Activated T-helper 1 cell treated with anti-CD3 and anti-CD28 coated beads, Interleukin-12 subunit alpha, Interleukin-12 subunit beta, Interleukin-2, Interleukin-4 antibody, amounts not matched to agents 30 ng/mL and 10 ng/mL and 1 ng/mL, durations not matched to agents 14 hours and 24 hours and 36 hours (primary cell): ENCODE measurements at regions of chr17 and their contacts with region 1.

Region 1: DNA sequence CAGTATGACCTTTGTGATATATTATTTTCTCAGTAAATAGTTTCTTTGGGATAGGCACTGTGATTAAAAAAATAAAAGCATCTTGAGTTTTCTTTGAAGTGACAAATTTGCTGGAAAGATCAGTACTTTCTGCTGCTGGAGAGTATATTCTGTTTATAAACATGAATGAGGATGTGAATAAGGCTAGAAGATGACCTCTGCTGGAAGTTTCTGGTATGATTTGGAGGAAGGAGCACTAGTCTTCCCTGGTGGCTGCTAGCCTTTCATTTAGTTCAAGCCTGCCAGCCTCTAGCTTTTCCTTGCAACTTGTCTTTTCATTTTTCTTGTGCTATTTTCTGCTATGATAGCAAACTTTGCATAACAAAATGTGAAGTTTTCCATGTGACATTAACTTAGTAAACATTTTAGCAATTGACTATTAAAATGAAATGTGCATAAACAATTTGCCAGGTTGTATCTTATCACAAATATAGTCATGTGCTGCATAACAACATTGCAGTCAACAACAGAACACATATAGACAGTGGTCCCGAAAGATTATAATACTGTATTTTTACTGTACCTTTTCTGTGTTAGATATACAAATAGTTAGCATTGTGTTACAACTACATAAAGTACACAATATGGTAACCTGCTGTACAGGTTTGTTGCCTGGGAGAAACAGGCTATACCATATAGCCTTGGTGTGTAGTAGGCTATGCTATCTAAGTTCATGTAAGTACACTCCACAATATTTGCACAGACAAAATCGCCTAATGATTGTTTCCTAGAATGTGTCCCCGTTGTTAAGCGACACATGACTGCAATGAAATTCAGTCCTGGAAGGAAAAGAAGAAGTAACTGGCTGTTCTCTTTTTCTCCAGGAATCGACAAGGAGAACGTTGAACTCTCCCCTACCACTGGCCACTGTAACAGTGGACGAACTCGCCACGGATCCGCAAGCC is 18.1 kb upstream of the RAB11FIP4 start:
- DNase-seq: no peak
- H3K4me3 Mint-ChIP-seq: no peak overlapping the region
- H3K27ac Mint-ChIP-seq: no peak overlapping the region
- H3K4me1 Mint-ChIP-seq: peaks cover 21% of the 10 kb centered on the region
- H3K27me3 Mint-ChIP-seq: no peaks in the 10 kb centered on the region

Region 2: DNA sequence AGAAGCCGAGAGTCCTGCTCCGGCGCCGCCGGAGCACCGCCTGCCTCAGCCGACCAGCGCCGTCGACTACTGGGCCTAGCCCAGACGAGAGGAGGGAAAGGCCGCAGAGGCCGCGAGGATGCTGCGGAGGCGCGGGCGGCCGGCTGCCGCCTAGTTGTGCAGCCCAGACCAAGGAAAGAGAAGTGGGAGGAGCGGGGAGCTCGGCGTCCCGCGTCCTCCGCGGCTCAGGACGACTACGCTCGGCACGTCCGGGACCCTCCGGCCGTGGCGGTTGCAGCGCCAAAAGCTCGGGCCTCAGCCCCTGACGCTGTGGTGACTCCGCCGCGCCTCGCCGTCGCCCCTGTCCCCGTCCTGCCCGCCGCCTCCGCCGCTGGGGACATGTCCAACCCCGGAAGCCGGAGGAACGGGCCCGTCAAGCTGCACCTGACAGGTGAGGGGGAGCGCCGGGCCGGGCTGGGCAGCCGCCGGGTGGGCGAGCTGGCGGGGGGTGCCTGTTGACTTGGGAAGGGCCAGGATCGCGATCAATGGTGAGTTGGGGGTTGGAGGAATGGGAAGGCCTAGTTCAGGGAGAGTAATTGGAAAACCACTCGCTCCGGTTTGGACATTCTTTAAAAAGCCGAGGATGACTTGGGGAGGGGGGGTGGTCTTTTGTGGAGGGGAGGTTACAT is 364.9 kb before region 1 on chr17:
- intact Hi-C with region 1: loop called (anchors 1 kb)
- DNase-seq: peak; percentile 43
- H3K4me3 Mint-ChIP-seq: peak overlapping the region; percentile 85
- H3K27ac Mint-ChIP-seq: peak overlapping the region; percentile 70
- H3K4me1 Mint-ChIP-seq: peaks cover 30% of the 10 kb centered on the region
- H3K27me3 Mint-ChIP-seq: peaks cover 16% of the 10 kb centered on the region

Region 3: DNA sequence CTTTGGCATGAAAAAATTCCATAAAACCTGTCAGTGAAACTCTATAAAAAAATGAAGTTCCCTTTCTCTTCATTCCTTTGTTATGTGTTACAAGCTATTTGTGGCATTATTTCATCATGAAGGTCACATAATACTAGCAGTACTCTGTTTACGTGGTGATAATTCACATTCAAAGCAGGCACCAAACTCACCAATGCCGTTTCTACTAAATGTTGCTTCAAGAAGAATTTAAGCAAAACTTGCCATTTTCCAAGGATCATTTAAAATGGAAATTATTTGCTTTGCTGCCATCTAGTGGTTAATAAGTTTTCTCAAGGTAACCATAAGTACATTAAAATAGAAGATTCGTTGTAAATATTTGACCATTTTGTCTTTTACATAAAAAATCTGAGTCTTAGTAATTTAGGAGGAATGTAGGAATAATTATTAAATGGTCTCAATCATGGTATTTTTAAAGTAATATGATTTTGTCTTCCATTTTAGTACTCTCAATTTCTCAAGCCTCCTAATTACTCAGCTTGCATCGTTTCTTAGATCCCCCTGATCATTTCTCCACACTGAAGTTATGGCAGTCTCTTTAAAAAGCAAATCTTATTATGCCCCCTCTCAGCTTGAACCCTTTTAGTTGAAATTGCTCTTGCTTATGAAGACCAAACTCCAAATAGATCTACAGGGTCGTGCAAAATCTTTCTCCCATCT is 157.2 kb before region 1 on chr17:
- intact Hi-C with region 1: loop called (anchors 2 kb)
- DNase-seq: no peak
- H3K4me3 Mint-ChIP-seq: no peak overlapping the region
- H3K27ac Mint-ChIP-seq: no peak overlapping the region
- H3K4me1 Mint-ChIP-seq: no peaks in the 10 kb centered on the region
- H3K27me3 Mint-ChIP-seq: no peaks in the 10 kb centered on the region

Region 4: GRCh38 chr17:31313982-31314784 is 59.2 kb before region 1 on chr17 and contains the start of gene EVI2B:
- intact Hi-C with region 1: loop called (anchors 5 kb)
- DNase-seq: no peak
- H3K4me3 Mint-ChIP-seq: peak within 1 kb of the TSS; percentile 92
- H3K27ac Mint-ChIP-seq: peak within 1 kb of the TSS; percentile 90
- H3K4me1 Mint-ChIP-seq: peaks cover 74% of the 10 kb centered on the region
- H3K27me3 Mint-ChIP-seq: no peaks in the 10 kb centered on the region
- total RNA-seq, gene EVI2B: 21.7 and 25.1 TPM in 2 replicates